Posterior cingulate gyrus (tissue), 11 donors: ENCODE measurements at regions of chr9 and their contacts with region 1.

Region 1: GRCh38 chr9:133532937-133533668 is 1.4 kb upstream of the ADAMTSL2 start:
- DNase-seq: peak in 8 of 10 donors; percentile 58 to 95 (median 70)

Region 2: DNA sequence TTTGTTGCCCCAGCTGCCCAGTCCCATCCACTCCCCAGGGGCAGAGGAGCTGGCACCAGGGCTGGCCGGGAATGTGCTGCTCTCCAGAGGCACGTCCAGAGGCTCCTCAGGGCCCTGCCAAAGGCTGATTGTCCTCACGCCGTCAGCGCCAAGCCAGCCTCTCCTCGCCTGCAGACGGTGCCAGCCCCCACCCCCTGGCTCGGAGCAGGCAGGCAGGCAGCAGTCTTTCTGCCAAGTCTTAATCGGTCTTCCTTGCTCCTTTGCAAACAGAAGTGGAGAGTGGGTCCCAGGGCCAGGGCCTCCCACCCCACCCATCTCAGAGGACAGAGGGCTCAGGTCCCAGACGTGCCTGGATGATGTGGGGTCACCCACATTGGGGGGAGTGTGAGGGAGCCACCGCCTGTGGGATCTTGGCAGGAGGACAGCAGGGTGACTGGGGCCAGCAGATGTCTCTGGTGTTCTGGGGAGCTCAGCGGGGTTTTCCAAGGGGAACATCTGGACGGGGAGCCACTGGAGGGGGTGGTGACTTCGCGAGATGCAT is 39.8 kb after region 1 on chr9:
- intact Hi-C with region 1: loop called (anchors 5 kb)
- DNase-seq: peak; percentile 75 to 98 (median 85)

Region 3: DNA sequence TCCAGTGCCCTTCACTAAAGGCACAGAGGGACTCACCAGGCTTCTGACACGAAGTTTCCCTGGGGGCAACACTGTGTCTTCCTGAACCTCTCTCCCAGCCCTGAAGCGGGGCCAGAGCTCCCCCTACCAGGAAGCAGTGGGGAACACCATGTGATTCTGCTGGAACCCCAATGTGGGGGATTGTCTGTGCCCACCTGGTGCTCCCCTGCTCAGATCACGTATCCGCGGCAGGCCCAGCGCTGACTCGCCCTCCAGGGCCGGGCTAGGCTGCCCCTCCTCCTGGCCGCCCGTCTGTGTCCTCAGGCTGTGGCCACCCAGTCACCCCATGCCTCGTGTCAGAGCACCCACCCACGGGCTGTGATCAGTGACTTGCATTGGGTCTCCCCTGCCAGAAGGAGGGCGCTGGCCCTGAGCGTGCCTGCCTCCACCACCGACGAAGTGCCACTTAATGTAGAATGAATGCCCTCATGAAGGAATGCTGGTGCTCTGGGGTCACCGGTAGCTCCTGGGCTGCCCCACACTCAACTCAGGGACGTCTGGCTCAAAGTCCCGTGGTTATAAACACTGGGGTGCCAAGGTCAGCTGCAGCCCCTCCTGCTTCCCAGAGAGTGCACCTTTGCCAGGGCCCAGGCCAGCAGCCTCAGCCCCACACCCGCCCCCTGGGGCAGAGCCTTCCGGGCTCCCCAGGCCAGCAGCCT is 182.9 kb after region 1 on chr9:
- intact Hi-C with region 1: loop called (anchors 10 kb)
- DNase-seq: peak in 8 of 10 donors; percentile 11 to 91 (median 55)